ENCODE measurements at regions of chr1 and their contacts with region 1.

Region 1: GRCh38 chr1:174022080-174022975 is at the start of gene RC3H1:
- DNase-seq: peak; percentile 63 to 92
- H3K4me3 ChIP-seq: peak within 1 kb of the TSS; percentile 88 to 100
- H3K27ac ChIP-seq: peak within 1 kb of the TSS; percentile 90 to 94
- H3K4me1 ChIP-seq: peaks cover 19 to 22% of the 10 kb centered on the region in 2 donors
- H3K27me3 ChIP-seq: no peaks in the 10 kb centered on the region
- CTCF ChIP-seq: no peak
- total RNA-seq, gene RC3H1: 5.1 TPM

Region 2: DNA sequence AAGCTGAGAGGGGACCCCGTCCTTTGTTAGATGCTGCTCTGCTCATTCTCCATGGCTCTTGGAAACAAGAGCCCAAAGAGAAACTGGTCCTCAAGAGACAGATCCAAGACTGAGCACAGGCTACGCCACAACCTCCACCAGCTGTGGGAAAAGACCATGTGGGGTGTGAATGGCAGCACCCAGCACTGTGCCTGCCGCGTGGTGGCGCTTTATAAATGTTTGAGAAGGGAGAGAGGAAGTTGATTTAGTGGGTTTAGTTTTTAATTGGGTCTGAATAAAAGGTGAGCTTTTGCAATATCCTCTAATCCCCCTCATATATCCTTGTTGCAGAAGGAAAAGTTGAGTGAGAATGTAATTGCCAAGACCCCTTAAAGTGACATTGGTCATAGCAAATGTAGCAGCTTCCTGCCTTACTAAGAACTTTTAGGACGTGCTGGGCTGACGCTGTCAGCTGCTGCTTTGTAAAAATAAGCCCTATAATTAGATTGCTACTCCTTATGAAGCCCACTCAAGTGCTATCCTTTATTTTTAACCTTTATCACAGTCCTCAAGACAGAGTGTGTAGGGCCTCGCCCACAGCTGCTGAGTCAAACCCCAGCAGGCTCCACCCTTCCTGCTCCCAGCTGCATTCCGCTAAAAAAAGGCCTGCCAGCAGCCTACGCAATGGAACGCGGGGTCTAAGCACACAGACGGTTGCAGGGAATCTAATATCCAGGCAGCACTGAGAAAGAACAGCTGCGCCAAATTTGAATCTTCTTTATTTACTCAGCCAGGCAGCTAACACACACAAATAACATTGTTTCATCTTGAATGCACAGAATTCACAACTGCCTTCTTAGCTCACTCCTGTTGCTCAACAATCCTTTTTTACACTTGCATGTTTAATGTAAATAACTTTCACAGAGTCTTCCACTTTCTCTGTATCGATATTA is 592.6 kb before region 1 on chr1:
- intact Hi-C with region 1: loop called (anchors 10 kb)
- DNase-seq: peak; percentile 49 to 95
- H3K4me3 ChIP-seq: peak overlapping the region; percentile 34 to 46
- H3K27ac ChIP-seq: peak overlapping the region; percentile 75 to 85
- H3K4me1 ChIP-seq: peaks cover 0 to 14% of the 10 kb centered on the region in 2 donors
- H3K27me3 ChIP-seq: no peaks in the 10 kb centered on the region
- CTCF ChIP-seq: peak; percentile 48 to 69 (median 48)

Region 3: GRCh38 chr1:174159252-174160108 is 137.2 kb after region 1 on chr1 and contains the start of gene RABGAP1L:
- intact Hi-C with region 1: loop called (anchors 1 kb)
- DNase-seq: peak; percentile 69 to 96
- H3K4me3 ChIP-seq: peak within 1 kb of the TSS; percentile 62 to 96
- H3K27ac ChIP-seq: peak within 1 kb of the TSS; percentile 82 to 92
- H3K4me1 ChIP-seq: peaks cover 0 to 7% of the 10 kb centered on the region in 2 donors
- H3K27me3 ChIP-seq: no peaks in the 10 kb centered on the region
- CTCF ChIP-seq: no peak
- total RNA-seq, gene RABGAP1L: 48.4 TPM